Heart left ventricle (tissue), 16 donors: ENCODE measurements at regions of chr20 and their contacts with region 1.

Region 1: DNA sequence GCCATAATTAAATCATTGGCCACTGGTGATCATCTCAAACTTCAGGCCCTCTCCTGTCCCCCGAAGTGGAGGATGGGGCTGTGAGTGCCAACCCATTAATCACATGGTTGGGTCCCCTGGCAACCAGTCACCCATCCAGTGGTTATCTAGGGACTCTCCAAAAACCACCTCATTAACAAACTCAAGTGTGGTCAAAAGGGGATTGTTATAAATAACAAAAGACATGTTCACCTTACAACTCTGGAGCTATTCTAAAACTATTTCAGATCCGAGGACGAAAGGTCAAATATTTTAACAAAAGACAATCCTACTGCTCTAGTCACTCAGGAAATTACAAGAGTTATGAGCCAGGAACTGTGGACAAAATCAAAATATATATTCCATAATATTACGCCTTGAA is 95.5 kb upstream of the PRND start:
- DNase-seq: no peak
- ATAC-seq: no peak
- H3K4me3 ChIP-seq: no peak overlapping the region
- H3K27ac ChIP-seq: no peak overlapping the region
- H3K4me1 ChIP-seq: no peaks in the 10 kb centered on the region
- H3K27me3 ChIP-seq: peaks cover 0 to 4% (median 0%) of the 10 kb centered on the region in 9 donors
- CTCF ChIP-seq: no peak
- POLR2A ChIP-seq: no peak

Region 2: DNA sequence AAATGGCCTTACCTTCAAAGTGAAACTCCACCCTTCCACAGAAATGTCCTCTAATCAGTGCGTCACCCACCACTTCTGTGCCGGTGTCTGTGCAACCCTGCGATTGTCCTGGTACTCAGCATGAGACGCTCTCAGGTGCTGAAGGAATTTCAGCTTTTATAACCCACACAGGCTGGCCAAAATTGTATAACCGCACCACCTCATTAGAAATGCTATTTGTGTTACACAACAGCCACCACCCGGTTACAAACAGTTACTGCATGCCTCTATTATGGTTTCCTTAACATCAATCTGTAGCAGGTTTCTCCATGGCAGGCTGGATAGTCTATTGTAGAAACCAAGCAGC is 323.6 kb after region 1 on chr20:
- intact Hi-C with region 1: loop called in 1 of 10 experiments (anchors 5 kb)
- DNase-seq: no peak
- ATAC-seq: peak; percentile 32 to 76 (median 58)
- H3K4me3 ChIP-seq: no peak overlapping the region
- H3K27ac ChIP-seq: no peak overlapping the region
- H3K4me1 ChIP-seq: peaks cover 0 to 39% (median 5%) of the 10 kb centered on the region in 12 donors
- H3K27me3 ChIP-seq: no peaks in the 10 kb centered on the region
- CTCF ChIP-seq: peak in 11 of 12 donors; percentile 30 to 62 (median 45)
- POLR2A ChIP-seq: no peak